ENCODE measurements at regions of chr1 and their contacts with region 1.

Region 1: GRCh38 chr1:27349784-27350662 is 8.2 kb downstream of the SYTL1 start:
- DNase-seq: peak; percentile 80
- ATAC-seq: peak; percentile 41
- H3K4me3 Mint-ChIP-seq: peak overlapping the region; percentile 75
- H3K27ac Mint-ChIP-seq: no peak overlapping the region
- H3K4me1 Mint-ChIP-seq: peaks cover 18% of the 10 kb centered on the region
- H3K27me3 Mint-ChIP-seq: peaks cover 12% of the 10 kb centered on the region
- CTCF ChIP-seq: no peak

Region 2: DNA sequence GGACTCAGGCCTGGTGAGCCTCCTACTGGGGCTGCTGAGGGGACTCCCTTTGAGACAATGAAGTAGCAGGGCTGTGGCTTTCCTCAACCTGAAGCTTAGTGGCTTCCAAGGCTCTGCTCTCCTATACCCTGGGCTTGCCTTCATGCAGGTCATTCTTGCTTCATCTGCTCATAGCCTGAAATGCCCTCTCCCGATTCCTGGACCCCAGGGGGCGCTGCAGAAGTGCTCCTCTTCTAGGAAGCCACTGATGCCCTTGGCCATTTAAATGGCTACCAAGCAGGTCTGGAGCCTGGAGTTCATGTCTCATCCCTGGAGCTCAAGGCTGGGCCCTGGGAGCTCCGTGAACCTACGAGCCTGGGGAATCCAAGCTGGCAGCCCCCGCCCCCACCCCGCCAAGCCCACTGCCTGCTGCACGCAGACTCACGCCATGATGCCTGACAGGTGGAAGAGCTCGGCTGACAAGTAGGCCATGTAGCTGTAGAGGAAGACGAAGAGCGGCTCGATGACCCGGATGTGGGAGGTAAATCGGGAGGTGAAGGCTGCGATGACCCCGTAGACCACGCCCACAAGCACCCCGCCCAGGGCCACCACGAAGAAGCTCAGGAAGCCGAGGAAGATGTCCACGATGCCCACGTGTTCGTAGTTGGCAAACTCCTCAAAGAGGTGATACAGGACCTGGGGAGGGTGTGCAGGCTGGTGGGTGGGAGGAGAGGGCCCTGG is 240.8 kb before region 1 on chr1:
- CTCF ChIA-PET with region 1: no interaction called
- POLR2A ChIA-PET with region 1: no interaction called
- DNase-seq: peak; percentile 85
- ATAC-seq: peak; percentile 79
- H3K4me3 Mint-ChIP-seq: no peak overlapping the region
- H3K27ac Mint-ChIP-seq: peak overlapping the region; percentile 67
- H3K4me1 Mint-ChIP-seq: peaks cover 12% of the 10 kb centered on the region
- H3K27me3 Mint-ChIP-seq: no peaks in the 10 kb centered on the region
- CTCF ChIP-seq: peak; percentile 22; the same call in 1 of the 2 replicates

Region 3: DNA sequence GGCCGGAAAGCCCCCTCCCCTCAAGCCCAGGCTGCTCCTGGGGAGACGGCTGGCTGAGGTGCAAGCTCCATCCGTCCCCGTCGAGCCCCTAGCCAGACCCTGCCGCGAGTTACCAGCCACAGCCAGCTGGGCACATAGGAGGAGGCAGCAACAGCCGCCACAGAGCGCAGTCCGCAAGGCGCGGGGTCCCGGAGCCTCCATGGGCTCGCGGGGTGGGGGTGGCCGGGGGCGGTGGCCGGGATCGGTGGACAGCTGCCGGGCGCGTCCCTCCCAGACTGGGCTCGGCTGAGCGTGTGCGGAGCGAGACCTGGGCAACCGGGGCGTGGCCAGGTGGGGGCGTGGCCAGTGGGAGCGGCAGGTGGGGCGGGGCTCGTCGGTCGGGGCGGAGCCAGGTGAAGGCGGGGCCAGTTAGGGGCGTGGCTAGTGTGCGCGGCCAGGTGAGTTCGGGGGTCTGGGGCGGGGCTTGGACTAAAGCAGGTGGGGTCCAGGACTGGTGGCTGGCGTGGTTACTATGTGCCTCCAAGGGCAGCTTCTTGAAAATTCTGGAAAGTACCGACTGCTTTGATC is 33.1 kb after region 1 on chr1 and contains the start of gene CD164L2:
- CTCF ChIA-PET with region 1: interaction called, 11 read pairs
- POLR2A ChIA-PET with region 1: interaction called, 4 read pairs
- DNase-seq: peak; percentile 93
- ATAC-seq: peak; percentile 95
- H3K4me3 Mint-ChIP-seq: peak within 1 kb of the TSS; percentile 67
- H3K27ac Mint-ChIP-seq: no peak within 1 kb of the TSS
- H3K4me1 Mint-ChIP-seq: peaks cover 4% of the 10 kb centered on the region; the same call in 1 of the 2 replicates
- H3K27me3 Mint-ChIP-seq: peaks cover 31% of the 10 kb centered on the region
- CTCF ChIP-seq: no peak
- total RNA-seq, gene CD164L2: 3.0 to 5.5 TPM (median 4.3 TPM) in 3 replicates